Brain microvascular endothelial cell (primary cell): ENCODE measurements at regions of chr3 and their contacts with region 1.

Region 1: DNA sequence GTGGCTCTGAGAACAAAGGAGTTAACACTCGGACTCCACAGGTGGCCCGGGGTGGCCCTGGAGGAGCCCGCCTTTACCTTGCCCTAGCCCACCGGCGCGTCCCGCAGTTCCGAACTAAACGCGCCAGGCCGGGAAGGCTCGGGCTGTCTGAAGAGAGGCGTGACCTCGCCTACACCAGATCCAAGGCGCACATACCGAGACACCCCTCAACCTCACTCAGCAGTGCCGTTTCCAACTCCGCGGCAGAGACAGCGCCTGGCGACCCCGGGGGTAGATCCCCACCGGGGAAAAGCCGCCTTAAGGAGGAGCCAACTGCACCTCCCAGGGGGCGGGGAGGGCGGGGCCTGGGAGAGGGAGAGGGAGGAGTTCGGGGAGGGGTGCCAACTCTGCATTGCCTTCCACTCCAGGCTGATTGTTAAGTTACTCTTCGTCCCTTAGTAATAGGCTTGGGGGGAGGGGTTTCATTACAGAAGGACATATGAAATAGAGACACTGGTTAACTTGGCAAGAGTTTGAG is at the start of gene DLG1:
- DNase-seq: peak; percentile 95
- H3K4me3 ChIP-seq: peak within 1 kb of the TSS; percentile 88
- H3K27ac ChIP-seq: peak within 1 kb of the TSS; percentile 96
- H3K27me3 ChIP-seq: no peaks in the 10 kb centered on the region
- CTCF ChIP-seq: no peak

Region 2: DNA sequence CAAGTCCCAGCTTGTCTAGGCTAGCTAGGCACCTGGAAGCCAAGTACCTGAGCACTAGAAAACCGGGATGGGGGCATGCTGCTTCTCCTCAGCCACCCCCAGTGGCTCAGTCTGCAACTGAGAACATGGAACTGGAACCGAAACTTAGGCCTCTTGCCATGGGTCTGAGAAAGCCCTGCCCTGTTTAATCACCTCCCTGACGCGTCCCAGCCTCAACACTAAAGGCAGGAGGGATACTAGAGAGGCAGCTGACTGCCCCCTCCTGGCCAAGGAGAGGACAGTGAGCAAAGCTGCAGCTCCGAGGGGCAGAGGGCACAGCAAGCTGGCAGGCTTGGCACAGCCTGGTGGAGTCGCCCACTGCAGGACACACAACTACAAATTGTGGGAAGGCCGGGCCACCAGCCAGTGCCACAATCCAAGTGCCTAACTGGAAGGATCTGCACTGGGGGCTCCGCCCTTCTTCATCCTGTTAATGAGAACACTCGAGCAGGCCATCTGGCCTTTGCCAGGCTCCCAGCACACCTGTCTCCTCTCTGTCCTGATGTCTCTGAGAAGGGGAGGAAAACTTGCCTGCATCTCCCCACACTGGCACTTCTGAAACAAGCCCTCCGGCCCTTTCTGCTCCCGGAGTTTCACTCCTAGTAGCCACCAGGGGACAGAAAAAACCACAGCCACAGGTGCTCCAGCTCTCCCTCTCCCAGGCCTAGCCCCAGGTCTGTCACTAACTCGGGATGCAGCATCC is 203.7 kb after region 1 on chr3:
- in situ Hi-C with region 1: loop called (anchors 25 kb)
- DNase-seq: no peak
- H3K4me3 ChIP-seq: no peak overlapping the region
- H3K27ac ChIP-seq: peak overlapping the region; percentile 6
- H3K27me3 ChIP-seq: no peaks in the 10 kb centered on the region
- CTCF ChIP-seq: peak; percentile 81